BJ (cell line): ENCODE measurements at regions of chr19 and their contacts with region 1.

Region 1: GRCh38 chr19:38929929-38930775 is at the start of gene SARS2:
- DNase-seq: peak; percentile 52
- H3K4me3 ChIP-seq: peak within 1 kb of the TSS; percentile 88
- H3K27me3 ChIP-seq: no peaks in the 10 kb centered on the region
- CTCF ChIP-seq: peak; percentile 100
- polyA plus RNA-seq, gene SARS2: 15.4 and 26.1 TPM in 2 replicates

Region 2: DNA sequence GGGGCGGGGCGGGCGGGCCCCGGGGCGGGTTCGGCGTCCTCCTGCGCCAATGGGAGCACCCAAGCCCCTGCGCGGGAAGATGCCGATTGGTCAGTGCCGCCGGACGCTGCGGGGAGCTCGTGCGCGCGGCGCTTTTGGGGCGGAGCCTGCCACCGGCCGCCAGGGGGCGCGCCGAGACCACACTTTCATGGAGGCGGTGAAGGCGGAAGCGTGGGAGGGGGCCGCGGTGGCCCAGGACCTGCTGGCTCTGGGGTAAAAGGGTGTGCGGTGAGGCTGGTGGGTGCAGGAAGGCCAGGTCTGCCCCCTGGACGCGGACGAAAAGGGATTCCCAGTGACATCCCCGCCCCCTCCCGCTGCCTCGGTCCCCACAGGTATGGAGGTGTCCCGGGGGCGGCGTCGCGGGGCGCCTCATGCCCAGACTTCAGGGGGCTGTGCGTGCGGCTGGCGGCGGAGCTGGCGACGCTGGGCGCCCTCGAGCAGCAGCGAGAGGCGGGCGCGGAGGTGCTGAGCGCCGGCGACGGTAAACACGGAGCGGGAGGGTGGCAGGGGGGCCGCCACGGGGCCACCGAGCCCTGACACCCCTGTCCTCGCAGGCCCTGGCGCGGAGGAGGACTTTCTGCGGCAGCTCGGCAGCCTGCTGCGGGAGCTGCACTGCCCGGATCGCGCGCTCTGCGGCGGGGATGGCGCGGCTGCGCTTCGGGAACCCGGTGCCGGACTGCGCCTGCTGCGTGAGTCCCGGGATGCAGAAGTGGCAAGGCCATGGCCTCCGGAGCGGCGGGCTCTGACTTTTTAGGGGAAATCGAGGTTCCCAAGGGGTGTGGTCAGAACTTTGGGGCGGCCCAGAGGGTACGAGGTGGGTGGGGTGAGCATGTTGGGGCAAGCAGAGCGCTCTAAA is 526.9 kb before region 1 on chr19 and contains the start of gene FAM98C:
- CTCF ChIA-PET with region 1: interaction called, 18 read pairs
- POLR2A ChIA-PET with region 1: no interaction called
- DNase-seq: peak; percentile 65
- H3K4me3 ChIP-seq: peak within 1 kb of the TSS; percentile 88
- H3K27me3 ChIP-seq: no peaks in the 10 kb centered on the region
- CTCF ChIP-seq: peak; percentile 74
- polyA plus RNA-seq, gene FAM98C: 9.9 and 12.2 TPM in 2 replicates

Region 3: DNA sequence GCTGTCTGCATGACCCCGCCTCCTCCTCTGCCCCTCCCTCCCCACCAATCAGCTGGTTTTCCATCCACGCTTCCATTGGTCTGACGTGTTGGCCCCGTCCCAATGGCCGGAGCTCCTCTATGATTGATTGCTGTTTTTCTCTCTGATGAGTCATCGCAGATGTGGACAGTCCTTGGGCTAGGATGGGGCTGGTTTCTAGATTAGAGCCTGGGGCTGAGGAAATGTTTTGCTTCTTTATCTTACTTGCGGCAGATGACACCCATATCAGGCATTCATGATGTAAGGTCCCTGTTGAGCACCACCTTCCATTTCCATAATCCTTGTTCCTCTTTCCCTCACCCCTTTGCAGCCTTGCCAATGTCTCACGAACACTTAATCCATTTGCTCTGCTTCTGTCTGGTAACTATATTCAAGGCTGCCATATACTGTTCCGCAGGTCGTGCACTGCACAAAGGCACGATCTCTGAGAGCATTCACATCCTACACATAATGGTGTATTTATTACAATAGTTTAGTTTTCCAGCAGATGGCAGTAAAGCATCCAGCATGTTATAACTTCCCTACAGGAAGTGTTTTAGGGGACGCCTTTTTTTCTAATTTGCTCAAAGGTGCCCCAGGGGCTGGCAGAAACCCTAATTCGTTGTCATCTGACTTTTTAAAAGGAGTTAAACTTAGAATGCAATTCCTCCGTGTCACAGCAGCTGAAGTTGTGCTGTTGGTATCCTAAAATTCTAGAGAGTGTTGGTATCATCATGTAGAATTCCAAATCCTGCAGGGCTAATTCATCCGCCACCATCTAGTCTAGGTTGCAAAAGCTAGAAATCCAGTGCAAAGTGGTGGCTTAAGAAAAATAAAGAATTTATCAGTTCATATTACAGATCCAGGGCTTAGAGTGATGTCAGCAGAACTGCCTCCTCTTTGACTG is 385.9 kb before region 1 on chr19:
- CTCF ChIA-PET with region 1: interaction called, 10 read pairs
- POLR2A ChIA-PET with region 1: no interaction called
- DNase-seq: peak; percentile 40
- H3K4me3 ChIP-seq: no peak overlapping the region; the same call in 1 of the 2 replicates
- H3K27me3 ChIP-seq: no peaks in the 10 kb centered on the region; the same call in 1 of the 2 replicates
- CTCF ChIP-seq: peak; percentile 54

Region 4: GRCh38 chr19:38899447-38900219 is 30.5 kb before region 1 on chr19 and contains the starts of genes NFKBIB and SIRT2:
- CTCF ChIA-PET with region 1: interaction called, 16 read pairs
- POLR2A ChIA-PET with region 1: no interaction called
- DNase-seq: peak; percentile 99
- H3K4me3 ChIP-seq: peak within 1 kb of the TSS; percentile 87
- H3K27me3 ChIP-seq: no peaks in the 10 kb centered on the region
- CTCF ChIP-seq: no peak
- polyA plus RNA-seq, gene NFKBIB: 12.8 and 20.6 TPM in 2 replicates
- polyA plus RNA-seq, gene SIRT2: 44.4 and 71.8 TPM in 2 replicates

Region 5: DNA sequence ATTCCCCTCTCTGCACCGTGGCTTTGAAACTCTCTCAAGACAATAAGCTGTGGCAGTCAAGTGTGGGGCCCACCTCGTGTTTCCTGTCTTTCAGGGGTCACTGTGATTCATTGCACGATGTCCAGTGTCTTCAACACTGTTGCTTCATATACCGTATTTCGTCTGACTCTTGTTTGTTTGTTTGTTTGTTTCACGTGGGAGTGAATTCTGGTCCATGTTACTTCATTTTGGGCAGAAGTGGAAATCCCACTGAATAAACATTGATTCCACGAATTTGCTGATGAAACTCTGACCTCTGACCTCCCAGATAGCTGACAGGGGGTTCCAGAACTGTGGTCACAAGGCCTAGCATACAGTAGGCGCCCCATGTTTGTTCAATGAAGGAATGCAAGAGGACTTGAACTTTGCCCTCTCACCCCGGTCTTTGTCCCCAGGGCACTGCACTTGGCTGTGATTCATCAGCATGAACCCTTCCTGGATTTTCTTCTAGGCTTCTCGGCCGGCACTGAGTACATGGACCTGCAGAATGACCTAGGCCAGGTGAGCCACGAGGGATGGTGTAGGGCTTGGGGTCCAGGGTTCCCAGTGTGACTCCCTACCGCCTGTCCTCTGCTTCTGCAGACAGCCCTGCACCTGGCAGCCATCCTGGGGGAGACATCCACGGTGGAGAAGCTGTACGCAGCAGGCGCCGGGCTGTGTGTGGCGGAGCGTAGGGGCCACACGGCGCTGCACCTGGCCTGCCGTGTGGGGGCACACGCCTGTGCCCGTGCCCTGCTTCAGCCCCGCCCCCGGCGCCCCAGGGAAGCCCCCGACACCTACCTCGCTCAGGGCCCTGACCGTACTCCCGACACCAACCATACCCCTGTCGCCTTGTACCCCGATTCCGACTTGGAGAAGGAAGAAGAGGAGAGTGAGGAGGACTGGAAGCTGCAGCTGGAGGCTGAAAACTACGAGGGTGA is 25.3 kb before region 1 on chr19:
- CTCF ChIA-PET with region 1: interaction called, 16 read pairs
- POLR2A ChIA-PET with region 1: no interaction called
- DNase-seq: no peak
- H3K4me3 ChIP-seq: no peak overlapping the region
- H3K27me3 ChIP-seq: no peaks in the 10 kb centered on the region
- CTCF ChIP-seq: no peak

Region 6: GRCh38 chr19:38919837-38920601 is 10.1 kb before region 1 on chr19:
- CTCF ChIA-PET with region 1: interaction called, 11 read pairs
- POLR2A ChIA-PET with region 1: no interaction called
- DNase-seq: no peak
- H3K4me3 ChIP-seq: no peak overlapping the region
- H3K27me3 ChIP-seq: no peaks in the 10 kb centered on the region
- CTCF ChIP-seq: no peak

Region 7: DNA sequence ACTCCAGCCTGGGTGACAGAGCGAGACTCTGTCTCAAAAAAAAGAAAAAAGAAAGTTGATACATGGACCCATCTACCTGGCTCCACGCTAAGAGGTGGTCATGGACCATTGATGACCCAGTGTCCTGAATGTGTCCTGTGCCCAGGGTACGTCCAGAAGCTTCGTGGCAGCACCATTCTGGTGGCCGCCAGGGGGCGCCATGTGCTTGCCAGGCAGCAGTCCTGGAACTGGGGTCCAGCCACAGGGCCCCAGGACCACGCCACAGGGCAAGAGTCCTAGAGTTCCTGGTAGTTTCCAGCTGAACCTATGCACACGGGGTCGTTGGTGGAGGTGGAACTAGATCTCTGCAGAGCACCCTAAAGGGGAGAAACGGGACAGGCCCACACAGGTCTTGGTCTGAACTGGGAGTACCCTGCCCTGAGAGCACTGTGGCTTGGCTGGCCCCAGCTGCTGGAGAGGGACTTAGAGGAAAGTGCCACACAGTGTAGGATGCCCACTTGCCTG is 122.1 kb after region 1 on chr19:
- CTCF ChIA-PET with region 1: no interaction called
- POLR2A ChIA-PET with region 1: no interaction called
- DNase-seq: no peak
- H3K4me3 ChIP-seq: no peak overlapping the region
- H3K27me3 ChIP-seq: no peaks in the 10 kb centered on the region
- CTCF ChIP-seq: peak; percentile 93